H1 (cell line): ENCODE measurements at regions of chr1 and their contacts with region 1.

Region 1: GRCh38 chr1:175757381-175758015 is 14.1 kb upstream of the TNR start:
- DNase-seq: peak; percentile 59 to 81
- H3K4me3 ChIP-seq: no peak overlapping the region
- H3K27ac ChIP-seq: no peak overlapping the region
- H3K4me1 ChIP-seq: no peaks in the 10 kb centered on the region; a peak in 1 of 7 replicates
- H3K27me3 ChIP-seq: no peaks in the 10 kb centered on the region
- CTCF ChIP-seq: peak; percentile 88 to 94 (median 89)
- EP300 ChIP-seq: no peak
- POLR2A ChIP-seq: no peak
- RAD21 ChIP-seq: peak; percentile 80 to 89

Region 2: DNA sequence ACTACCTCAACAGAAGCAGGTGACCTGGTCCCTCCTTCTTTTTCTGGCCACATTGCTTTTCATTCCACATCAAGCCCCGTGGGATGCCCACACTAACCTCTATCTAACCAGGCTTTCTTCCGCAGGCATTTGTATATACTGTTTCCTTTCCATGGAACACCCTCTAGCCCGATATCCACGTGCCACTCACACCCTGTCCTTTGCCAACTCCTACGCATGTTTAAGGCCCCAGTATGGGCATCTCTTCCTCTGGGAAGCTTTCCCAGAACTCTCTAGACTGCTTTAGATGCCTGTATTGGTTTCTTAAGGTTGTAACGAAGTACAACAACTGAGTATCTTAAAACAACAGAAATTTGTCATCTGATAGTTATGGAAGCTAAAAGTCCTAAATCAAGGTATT is 135.1 kb before region 1 on chr1:
- CTCF ChIA-PET with region 1: no interaction called
- POLR2A ChIA-PET with region 1: no interaction called
- DNase-seq: no peak
- H3K4me3 ChIP-seq: no peak overlapping the region
- H3K27ac ChIP-seq: no peak overlapping the region
- H3K4me1 ChIP-seq: no peaks in the 10 kb centered on the region
- H3K27me3 ChIP-seq: no peaks in the 10 kb centered on the region
- CTCF ChIP-seq: no peak
- EP300 ChIP-seq: no peak
- POLR2A ChIP-seq: no peak
- RAD21 ChIP-seq: no peak

Region 3: GRCh38 chr1:175673371-175674150 is 83.9 kb before region 1 on chr1:
- CTCF ChIA-PET with region 1: interaction called, 13 read pairs
- POLR2A ChIA-PET with region 1: no interaction called
- DNase-seq: no peak
- H3K4me3 ChIP-seq: no peak overlapping the region
- H3K27ac ChIP-seq: no peak overlapping the region
- H3K4me1 ChIP-seq: peaks cover 0 to 3% (median 0%) of the 10 kb centered on the region in 4 experiments; a peak in 2 of 7 replicates
- H3K27me3 ChIP-seq: no peaks in the 10 kb centered on the region; a peak in 1 of 7 replicates
- CTCF ChIP-seq: no peak
- EP300 ChIP-seq: no peak
- POLR2A ChIP-seq: no peak
- RAD21 ChIP-seq: no peak

Region 4: GRCh38 chr1:175708788-175709187 is 48.7 kb before region 1 on chr1:
- CTCF ChIA-PET with region 1: no interaction called
- POLR2A ChIA-PET with region 1: no interaction called
- DNase-seq: no peak
- H3K4me3 ChIP-seq: no peak overlapping the region
- H3K27ac ChIP-seq: no peak overlapping the region
- H3K4me1 ChIP-seq: peaks cover 0 to 2% (median 0%) of the 10 kb centered on the region in 4 experiments; a peak in 3 of 7 replicates
- H3K27me3 ChIP-seq: no peaks in the 10 kb centered on the region
- CTCF ChIP-seq: no peak
- EP300 ChIP-seq: no peak
- POLR2A ChIP-seq: no peak
- RAD21 ChIP-seq: no peak

Region 5: GRCh38 chr1:175725684-175726083 is 31.8 kb before region 1 on chr1:
- CTCF ChIA-PET with region 1: interaction called, 11 read pairs
- POLR2A ChIA-PET with region 1: no interaction called
- DNase-seq: no peak
- H3K4me3 ChIP-seq: no peak overlapping the region
- H3K27ac ChIP-seq: no peak overlapping the region
- H3K4me1 ChIP-seq: no peaks in the 10 kb centered on the region
- H3K27me3 ChIP-seq: no peaks in the 10 kb centered on the region; a peak in 1 of 7 replicates
- CTCF ChIP-seq: no peak
- EP300 ChIP-seq: no peak
- POLR2A ChIP-seq: no peak
- RAD21 ChIP-seq: 0 out of 4 replicates have a peak, but pooled peaks of 1 of the 2 experiments have one; percentile 10

Region 6: DNA sequence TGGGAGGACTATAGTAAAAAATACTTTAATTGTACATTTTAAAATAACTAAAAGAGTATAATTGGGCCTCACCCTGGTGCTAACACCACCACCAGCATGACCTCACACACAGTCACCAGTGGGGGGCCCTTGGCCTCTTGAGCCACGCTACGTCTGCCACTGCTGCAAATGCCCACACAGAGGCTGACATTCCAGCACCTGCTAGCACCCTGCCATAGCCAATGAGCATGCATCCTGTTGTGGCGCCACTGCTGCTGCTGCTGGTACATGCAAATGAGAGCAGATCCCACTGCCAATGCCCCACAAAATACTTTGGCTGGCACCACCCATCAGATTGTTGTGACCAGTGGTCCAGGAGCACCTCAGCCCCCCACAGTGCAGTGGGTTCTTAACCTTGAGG is 17.4 kb after region 1 on chr1:
- CTCF ChIA-PET with region 1: interaction called, 46 read pairs
- POLR2A ChIA-PET with region 1: no interaction called
- DNase-seq: peak in 1 of 2 experiments; percentile 47
- H3K4me3 ChIP-seq: no peak overlapping the region
- H3K27ac ChIP-seq: no peak overlapping the region
- H3K4me1 ChIP-seq: no peaks in the 10 kb centered on the region
- H3K27me3 ChIP-seq: peaks cover 0 to 3% (median 1%) of the 10 kb centered on the region in 4 experiments; a peak in 1 of 7 replicates
- CTCF ChIP-seq: no peak
- EP300 ChIP-seq: no peak
- POLR2A ChIP-seq: no peak
- RAD21 ChIP-seq: peak in 1 of 2 experiments; percentile 13; a peak in 1 of 4 replicates

Region 7: GRCh38 chr1:175802407-175803131 is 45.1 kb after region 1 on chr1:
- CTCF ChIA-PET with region 1: interaction called, 12 read pairs
- POLR2A ChIA-PET with region 1: no interaction called
- DNase-seq: no peak
- H3K4me3 ChIP-seq: no peak overlapping the region
- H3K27ac ChIP-seq: no peak overlapping the region
- H3K4me1 ChIP-seq: peaks cover 0 to 1% (median 0%) of the 10 kb centered on the region in 4 experiments; a peak in 1 of 7 replicates
- H3K27me3 ChIP-seq: no peaks in the 10 kb centered on the region; a peak in 2 of 7 replicates
- CTCF ChIP-seq: peak in 2 of 3 experiments; percentile 29 to 33; a peak in 2 of 4 replicates
- EP300 ChIP-seq: no peak
- POLR2A ChIP-seq: no peak
- RAD21 ChIP-seq: peak; percentile 4 to 23; a peak in 2 of 4 replicates